Mammary epithelial cell (primary cell): ENCODE measurements at regions of chr14 and their contacts with region 1.

Region 1: DNA sequence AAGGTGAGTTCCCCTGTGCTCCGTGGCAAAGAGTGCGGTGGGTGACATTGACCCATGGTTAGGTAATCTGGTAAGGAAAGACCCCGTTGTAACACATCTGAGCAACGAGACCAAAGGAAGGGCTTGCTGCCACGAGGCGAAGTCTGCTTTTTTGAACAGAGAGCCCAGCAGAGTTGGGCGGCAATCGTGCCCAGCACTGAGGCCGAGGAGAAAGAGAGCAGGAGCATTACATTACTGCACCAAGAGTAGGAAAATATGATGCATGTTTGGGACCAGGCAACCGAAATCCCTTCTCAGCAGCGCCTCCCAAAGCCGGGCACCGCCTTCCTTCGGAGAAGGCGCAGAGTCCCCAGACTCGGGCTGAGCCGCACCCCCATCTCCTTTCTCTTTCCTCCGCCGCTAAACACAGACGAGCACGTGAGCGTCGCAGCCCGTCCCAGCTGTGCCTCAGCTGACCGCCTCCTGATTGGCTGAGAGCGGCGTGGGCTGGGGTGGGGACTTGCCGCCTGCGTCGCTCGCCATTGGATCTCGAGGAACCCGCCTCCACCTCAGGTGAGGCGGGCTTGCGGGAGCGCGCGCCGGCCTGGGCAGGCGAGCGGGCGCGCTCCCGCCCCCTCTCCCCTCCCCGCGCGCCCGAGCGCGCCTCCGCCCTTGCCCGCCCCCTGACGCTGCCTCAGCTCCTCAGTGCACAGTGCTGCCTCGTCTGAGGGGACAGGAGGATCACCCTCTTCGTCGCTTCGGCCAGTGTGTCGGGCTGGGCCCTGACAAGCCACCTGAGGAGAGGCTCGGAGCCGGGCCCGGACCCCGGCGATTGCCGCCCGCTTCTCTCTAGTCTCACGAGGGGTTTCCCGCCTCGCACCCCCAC is at the start of gene HIF1A:
- DNase-seq: peak; percentile 99
- H3K4me3 ChIP-seq: peak within 1 kb of the TSS; percentile 87 to 96 (median 90)
- H3K27ac ChIP-seq: peak within 1 kb of the TSS; percentile 90
- H3K4me1 ChIP-seq: peaks cover 20% of the 10 kb centered on the region
- H3K27me3 ChIP-seq: no peaks in the 10 kb centered on the region
- CTCF ChIP-seq: peak in 1 of 2 donors; percentile 37
- total RNA-seq, gene HIF1A: 227 to 682 TPM

Region 2: GRCh38 chr14:61512026-61512834 is 182.8 kb before region 1 on chr14:
- CTCF ChIA-PET with region 1: no interaction called
- dilution Hi-C with region 1: no loop called
- in situ Hi-C with region 1: no loop called
- intact Hi-C with region 1: loop called (anchors 5 kb)
- DNase-seq: peak; percentile 79
- H3K4me3 ChIP-seq: no peak overlapping the region
- H3K27ac ChIP-seq: peak overlapping the region; percentile 70
- H3K4me1 ChIP-seq: peaks cover 55% of the 10 kb centered on the region
- H3K27me3 ChIP-seq: no peaks in the 10 kb centered on the region
- CTCF ChIP-seq: no peak

Region 3: DNA sequence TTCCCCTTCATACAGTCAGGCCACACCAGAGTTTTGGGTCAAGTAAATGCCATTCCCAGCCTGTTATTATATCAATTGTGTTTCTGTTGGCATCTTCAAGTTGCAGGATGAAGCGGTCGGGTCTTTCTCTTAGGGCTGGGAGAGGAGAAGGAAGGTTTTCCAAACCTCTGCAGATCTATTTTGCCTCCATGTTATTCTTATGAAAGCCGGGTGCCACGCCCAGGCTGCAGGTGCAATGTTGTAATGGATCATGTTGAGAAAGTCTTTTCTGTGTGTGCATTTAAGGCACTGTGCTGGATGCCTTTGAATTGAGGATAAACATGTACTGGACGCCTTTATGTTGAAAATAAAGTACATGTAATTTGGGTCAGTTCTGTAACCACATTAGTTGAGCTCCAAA is 164.2 kb before region 1 on chr14:
- CTCF ChIA-PET with region 1: no interaction called
- dilution Hi-C with region 1: no loop called
- in situ Hi-C with region 1: no loop called
- intact Hi-C with region 1: no loop called
- DNase-seq: no peak
- H3K4me3 ChIP-seq: no peak overlapping the region
- H3K27ac ChIP-seq: no peak overlapping the region
- H3K4me1 ChIP-seq: peaks cover 64% of the 10 kb centered on the region
- H3K27me3 ChIP-seq: no peaks in the 10 kb centered on the region
- CTCF ChIP-seq: no peak

Region 4: GRCh38 chr14:61561657-61562276 is 133.3 kb before region 1 on chr14:
- CTCF ChIA-PET with region 1: no interaction called
- dilution Hi-C with region 1: no loop called
- in situ Hi-C with region 1: no loop called
- intact Hi-C with region 1: loop called (anchors 1 kb)
- DNase-seq: peak; percentile 91
- H3K4me3 ChIP-seq: no peak overlapping the region
- H3K27ac ChIP-seq: peak overlapping the region; percentile 96
- H3K4me1 ChIP-seq: peaks cover 70% of the 10 kb centered on the region
- H3K27me3 ChIP-seq: no peaks in the 10 kb centered on the region
- CTCF ChIP-seq: no peak

Region 5: GRCh38 chr14:61644834-61645233 is 50.2 kb before region 1 on chr14:
- CTCF ChIA-PET with region 1: no interaction called
- dilution Hi-C with region 1: no loop called
- in situ Hi-C with region 1: no loop called
- intact Hi-C with region 1: loop called (anchors 2 kb)
- DNase-seq: no peak
- H3K4me3 ChIP-seq: no peak overlapping the region
- H3K27ac ChIP-seq: no peak overlapping the region
- H3K4me1 ChIP-seq: peaks cover 25% of the 10 kb centered on the region
- H3K27me3 ChIP-seq: no peaks in the 10 kb centered on the region
- CTCF ChIP-seq: no peak

Region 6: GRCh38 chr14:62691613-62692487 is 996.8 kb after region 1 on chr14:
- CTCF ChIA-PET with region 1: no interaction called
- dilution Hi-C with region 1: no loop called
- in situ Hi-C with region 1: no loop called
- intact Hi-C with region 1: loop called (anchors 5 kb)
- DNase-seq: peak; percentile 98
- H3K4me3 ChIP-seq: peak overlapping the region in 2 of 3 experiments; percentile 26 to 35
- H3K27ac ChIP-seq: peak overlapping the region; percentile 95
- H3K4me1 ChIP-seq: peaks cover 26% of the 10 kb centered on the region
- H3K27me3 ChIP-seq: no peaks in the 10 kb centered on the region
- CTCF ChIP-seq: no peak